Heart right ventricle (tissue), 16 donors: ENCODE measurements at regions of chr17 and their contacts with region 1.

Region 1: GRCh38 chr17:46841561-46842379 is 9.6 kb upstream of the WNT9B start:
- DNase-seq: no peak
- ATAC-seq: peak; percentile 24 to 76 (median 54)
- H3K4me3 ChIP-seq: peak overlapping the region in 3 of 10 donors; percentile 3 to 20 (median 11)
- H3K27ac ChIP-seq: no peak overlapping the region
- H3K4me1 ChIP-seq: peaks cover 0 to 10% (median 0%) of the 10 kb centered on the region in 9 donors
- H3K27me3 ChIP-seq: peaks cover 4 to 45% (median 25%) of the 10 kb centered on the region in 7 donors
- CTCF ChIP-seq: peak; percentile 58 to 87 (median 78)

Region 2: GRCh38 chr17:46935658-46936266 is 94.0 kb after region 1 on chr17:
- intact Hi-C with region 1: loop called in 7 of 10 experiments (anchors 2 to 10 kb)
- DNase-seq: peak in 1 of 2 donors; percentile 30
- ATAC-seq: peak; percentile 58 to 92 (median 80)
- H3K4me3 ChIP-seq: no peak overlapping the region
- H3K27ac ChIP-seq: peak overlapping the region in 6 of 10 donors; percentile 19 to 63 (median 36)
- H3K4me1 ChIP-seq: peaks cover 0 to 13% (median 0%) of the 10 kb centered on the region in 9 donors
- H3K27me3 ChIP-seq: no peaks in the 10 kb centered on the region
- CTCF ChIP-seq: no peak

Region 3: DNA sequence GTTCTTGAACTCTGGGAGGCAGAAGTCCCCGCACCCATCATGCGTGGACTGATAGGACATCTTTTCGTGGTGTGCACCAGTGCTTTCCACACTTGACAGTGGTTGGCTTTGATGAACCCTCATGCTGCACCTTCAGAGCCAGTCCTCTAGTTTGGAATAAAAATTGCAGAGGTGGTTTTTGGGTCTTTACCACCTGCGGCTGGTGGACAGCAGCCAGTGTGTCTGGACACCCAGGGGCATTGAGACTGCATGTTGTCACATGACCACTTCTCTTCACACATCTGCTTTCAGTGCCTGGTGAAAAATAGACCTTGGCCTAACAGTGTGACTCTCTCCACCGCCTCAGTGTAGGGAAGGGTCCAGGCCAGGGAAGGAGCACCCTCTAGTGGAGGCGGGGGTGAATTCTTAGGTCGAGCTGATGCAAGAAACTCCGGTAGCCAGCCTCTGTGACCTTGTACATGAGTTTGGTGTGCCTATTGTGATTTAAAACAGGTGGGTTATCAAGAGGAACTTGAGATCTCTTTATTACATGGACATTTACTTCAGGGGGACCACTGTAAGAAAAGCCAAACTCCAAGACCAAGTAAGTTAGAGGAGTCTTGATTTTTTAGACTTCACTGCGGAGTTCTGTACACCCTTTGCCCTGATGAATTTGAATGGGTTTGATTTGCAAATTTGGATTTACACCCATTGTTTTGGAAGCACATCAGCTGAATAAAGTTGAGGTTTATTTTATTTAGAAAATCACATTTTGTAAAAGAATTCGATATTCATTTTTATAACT is 99.0 kb after region 1 on chr17:
- intact Hi-C with region 1: loop called in 8 of 10 experiments (anchors 2 to 10 kb)
- DNase-seq: peak; percentile 64 to 78
- ATAC-seq: peak; percentile 68 to 88 (median 78)
- H3K4me3 ChIP-seq: no peak overlapping the region
- H3K27ac ChIP-seq: peak overlapping the region in 1 of 10 donors; percentile 24
- H3K4me1 ChIP-seq: peaks cover 0 to 33% (median 18%) of the 10 kb centered on the region in 9 donors
- H3K27me3 ChIP-seq: no peaks in the 10 kb centered on the region
- CTCF ChIP-seq: peak; percentile 55 to 89 (median 84)

Region 4: DNA sequence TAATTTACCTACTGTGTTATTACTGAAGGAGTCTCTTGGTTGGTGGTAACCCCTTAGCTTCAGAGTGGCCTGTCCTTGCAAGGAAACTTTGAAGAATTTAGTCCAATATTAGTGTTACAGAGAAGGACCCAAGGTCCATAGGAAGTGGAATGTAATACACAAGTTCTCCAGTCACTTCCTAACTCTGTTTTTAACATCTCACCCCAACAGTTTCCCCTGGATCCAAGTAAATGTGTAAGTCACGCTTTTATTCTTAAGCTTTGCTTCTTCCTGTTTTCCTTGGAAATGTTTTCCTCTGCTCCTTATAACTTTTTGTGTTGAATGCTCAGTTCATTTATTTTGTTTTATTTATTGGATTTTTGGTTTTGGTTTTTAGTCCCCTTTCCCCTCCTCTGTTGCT is 163.1 kb after region 1 on chr17:
- intact Hi-C with region 1: loop called in 4 of 10 experiments (anchors 5 kb)
- DNase-seq: no peak
- ATAC-seq: no peak
- H3K4me3 ChIP-seq: no peak overlapping the region
- H3K27ac ChIP-seq: peak overlapping the region in 6 of 10 donors; percentile 12 to 67 (median 28)
- H3K4me1 ChIP-seq: peaks cover 0 to 29% (median 8%) of the 10 kb centered on the region in 9 donors
- H3K27me3 ChIP-seq: no peaks in the 10 kb centered on the region
- CTCF ChIP-seq: no peak